Testis (tissue), 5 donors: ENCODE measurements at regions of chr10 and their contacts with region 1.

Region 1: GRCh38 chr10:62816331-62817120 is at the start of gene EGR2:
- DNase-seq: peak; percentile 97
- H3K4me3 ChIP-seq: peak within 1 kb of the TSS; percentile 77 to 91
- H3K27ac ChIP-seq: peak within 1 kb of the TSS; percentile 86 to 89
- H3K4me1 ChIP-seq: peaks cover 8% of the 10 kb centered on the region
- H3K27me3 ChIP-seq: no peaks in the 10 kb centered on the region
- CTCF ChIP-seq: no peak
- POLR2A ChIP-seq: no peak
- total RNA-seq, gene EGR2: 6.8 TPM

Region 2: DNA sequence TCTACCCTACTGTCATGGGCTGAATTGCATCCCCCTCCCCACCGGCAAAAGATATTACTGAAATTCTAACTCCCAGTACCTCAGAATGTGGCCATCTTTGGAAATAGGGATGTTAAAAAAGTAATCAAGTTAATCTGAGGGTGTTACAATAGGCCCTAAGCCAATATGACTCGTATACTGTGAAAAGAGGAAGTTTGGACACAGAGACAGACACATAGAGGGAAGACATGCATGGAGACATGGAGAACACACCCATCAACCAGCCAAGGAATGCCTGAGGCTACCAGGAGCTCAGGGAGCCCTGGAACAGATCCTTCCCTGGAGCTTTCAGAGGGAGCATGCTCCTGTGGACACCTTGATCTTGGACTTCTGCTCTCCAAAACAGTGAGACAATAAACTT is 150.3 kb before region 1 on chr10:
- intact Hi-C with region 1: no loop called
- DNase-seq: no peak
- H3K4me3 ChIP-seq: no peak overlapping the region
- H3K27ac ChIP-seq: no peak overlapping the region
- H3K4me1 ChIP-seq: no peaks in the 10 kb centered on the region
- H3K27me3 ChIP-seq: no peaks in the 10 kb centered on the region
- CTCF ChIP-seq: no peak
- POLR2A ChIP-seq: no peak

Region 3: DNA sequence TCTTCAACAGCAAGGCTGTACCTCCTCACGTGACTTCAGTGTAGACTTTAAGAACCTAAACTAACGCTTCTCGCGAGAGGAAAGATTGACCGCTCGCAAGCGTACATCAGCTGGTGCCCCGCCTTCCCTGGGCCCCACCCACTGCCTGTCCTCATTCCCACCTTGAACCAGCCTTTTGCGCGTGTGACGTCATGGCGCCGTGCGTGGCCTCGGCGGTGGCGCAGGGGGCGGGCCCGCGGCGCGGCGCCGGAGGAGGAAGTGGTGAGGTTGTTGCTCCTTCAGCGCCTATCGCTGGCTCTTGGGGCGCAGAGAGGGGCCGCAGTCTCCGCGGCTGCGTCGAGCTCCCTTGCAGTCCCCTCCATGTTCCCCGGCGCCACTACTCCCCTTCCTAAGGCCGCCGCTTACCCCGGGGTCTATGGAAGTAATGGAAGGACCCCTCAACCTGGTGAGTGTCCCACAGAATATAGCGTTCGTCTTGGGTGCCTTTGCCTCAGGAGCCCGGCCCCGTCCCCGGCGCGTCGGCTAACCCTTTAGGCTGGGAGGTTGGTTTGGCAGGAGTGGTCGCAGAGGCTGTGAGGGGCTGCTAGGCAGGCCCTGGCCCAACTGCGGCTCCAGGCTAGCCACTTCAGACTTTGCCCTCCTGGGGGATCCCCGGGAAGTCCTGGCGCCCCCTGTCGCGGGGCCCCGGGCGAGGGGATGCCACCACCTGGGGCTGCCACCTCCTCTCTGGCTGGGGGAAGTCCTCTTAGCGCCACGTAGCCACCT is 316.7 kb after region 1 on chr10 and contains the start of gene NRBF2:
- intact Hi-C with region 1: loop called (anchors 10 kb)
- DNase-seq: peak; percentile 99
- H3K4me3 ChIP-seq: peak within 1 kb of the TSS; percentile 90 to 99
- H3K27ac ChIP-seq: peak within 1 kb of the TSS; percentile 91 to 92
- H3K4me1 ChIP-seq: peaks cover 12% of the 10 kb centered on the region
- H3K27me3 ChIP-seq: no peaks in the 10 kb centered on the region
- CTCF ChIP-seq: no peak
- POLR2A ChIP-seq: peak; percentile 80
- total RNA-seq, gene NRBF2: 16.9 to 20.0 TPM